Posterior cingulate gyrus (tissue), 11 donors: ENCODE measurements at regions of chr2 and their contacts with region 1.

Region 1: DNA sequence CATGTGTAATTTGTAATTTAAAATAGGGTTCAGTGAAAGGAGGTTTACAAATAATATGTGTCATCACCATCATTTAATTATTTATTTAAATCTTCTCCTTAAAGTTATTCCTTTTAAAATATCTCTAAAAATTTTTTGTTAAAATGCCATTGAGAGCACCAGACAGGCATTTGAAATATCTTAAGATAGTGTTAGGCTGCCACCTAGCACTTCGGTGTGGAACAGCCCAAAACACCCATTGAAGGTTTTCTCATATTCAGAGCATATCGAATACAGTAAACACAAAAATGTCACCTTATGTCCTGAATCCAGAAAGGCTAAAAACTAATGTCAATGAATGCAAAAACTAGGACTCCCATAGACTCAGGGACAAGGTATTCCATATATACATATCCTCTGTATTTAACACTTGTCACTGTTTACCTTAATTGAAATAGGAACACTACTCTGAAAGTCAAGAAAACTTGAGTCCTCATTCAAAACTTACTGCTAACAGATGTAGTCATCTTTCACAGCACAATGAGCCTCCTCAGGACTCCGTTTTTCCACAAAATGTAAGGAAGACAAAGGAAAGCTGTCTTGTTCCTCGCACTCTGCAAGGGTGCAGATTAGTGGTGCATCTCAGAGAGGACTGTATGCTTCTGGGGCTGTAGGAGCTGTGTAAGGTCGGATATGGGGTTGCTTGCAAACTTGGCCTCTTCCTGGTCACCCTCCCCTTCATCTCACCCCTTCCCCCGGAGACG is 329.5 kb downstream of the PAX3 start:
- DNase-seq: peak in 6 of 10 donors; percentile 12 to 69 (median 26)

Region 2: GRCh38 chr2:220687231-220687843 is 1281.9 kb before region 1 on chr2:
- intact Hi-C with region 1: loop called (anchors 5 kb)
- DNase-seq: peak; percentile 45 to 92 (median 71)

Region 3: GRCh38 chr2:222115296-222115695 is 146.0 kb after region 1 on chr2:
- intact Hi-C with region 1: no loop called
- DNase-seq: no peak